Cardiac septum (tissue), 1 donor: ENCODE measurements at regions of chr14 and their contacts with region 1.

Region 1: GRCh38 chr14:24141097-24141880 is at the start of gene EMC9:
- DNase-seq: peak; percentile 100
- total RNA-seq, gene EMC9: 14.6 TPM

Region 2: DNA sequence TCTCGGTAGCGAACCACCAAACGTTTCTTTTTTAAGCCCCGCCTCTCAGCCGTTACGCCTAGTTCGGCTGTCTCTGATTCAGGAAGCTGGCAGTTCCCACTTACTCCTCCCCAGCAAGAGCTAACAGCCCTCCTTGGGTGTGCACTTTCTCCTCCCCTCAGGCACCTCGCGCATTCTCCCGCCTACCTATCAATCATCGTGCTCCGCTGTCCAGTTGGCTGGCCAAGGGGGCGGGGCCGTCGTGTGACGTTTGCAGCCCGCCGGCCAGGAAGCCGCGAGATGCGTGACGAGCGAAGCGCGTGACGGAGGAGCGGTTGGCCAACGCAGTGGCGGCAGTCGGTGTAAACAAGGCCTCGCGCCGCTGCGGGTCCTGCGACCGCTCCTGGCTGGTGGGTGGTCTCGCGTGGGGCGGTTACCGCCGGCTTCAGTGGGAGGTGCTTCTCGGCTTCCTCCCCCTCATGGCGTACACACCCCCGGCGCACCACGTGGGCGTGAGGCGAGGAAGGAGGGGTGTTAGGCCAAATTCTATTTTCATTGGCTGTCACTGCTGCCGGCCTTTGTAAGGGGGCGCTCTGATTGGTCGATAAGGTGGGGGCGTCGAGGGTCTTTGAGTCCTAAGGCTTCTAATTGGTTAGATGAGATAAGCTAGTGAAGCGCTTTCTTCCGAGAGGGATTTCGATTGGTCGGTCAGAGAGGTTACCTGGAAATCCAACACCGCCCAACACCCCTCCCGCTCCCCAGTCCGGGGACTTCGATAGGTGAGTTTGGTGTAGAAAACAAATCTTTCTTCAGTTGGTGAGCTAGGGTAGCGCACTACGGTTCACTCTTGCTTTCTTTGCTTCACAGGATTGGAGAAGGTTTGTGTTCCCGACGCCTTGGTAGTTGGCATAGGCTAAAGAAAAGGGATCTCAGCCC is 26.5 kb before region 1 on chr14 and contains the starts of genes DCAF11 and NRL:
- intact Hi-C with region 1: loop called (anchors 2 kb)
- DNase-seq: peak; percentile 99
- total RNA-seq, gene DCAF11: 54.1 TPM
- total RNA-seq, gene NRL: 2.4 TPM

Region 3: GRCh38 chr14:24398653-24399446 is 257.6 kb after region 1 on chr14 and contains the start of gene NYNRIN:
- intact Hi-C with region 1: no loop called
- DNase-seq: no peak
- total RNA-seq, gene NYNRIN: 5.0 TPM

Region 4: GRCh38 chr14:24534286-24534685 is 393.0 kb after region 1 on chr14:
- intact Hi-C with region 1: no loop called
- DNase-seq: no peak